Activated naive CD4-positive, alpha-beta T cell treated with anti-CD3 and anti-CD28 coated beads for 36 hours (primary cell): ENCODE measurements at regions of chr11 and their contacts with region 1.

Region 1: DNA sequence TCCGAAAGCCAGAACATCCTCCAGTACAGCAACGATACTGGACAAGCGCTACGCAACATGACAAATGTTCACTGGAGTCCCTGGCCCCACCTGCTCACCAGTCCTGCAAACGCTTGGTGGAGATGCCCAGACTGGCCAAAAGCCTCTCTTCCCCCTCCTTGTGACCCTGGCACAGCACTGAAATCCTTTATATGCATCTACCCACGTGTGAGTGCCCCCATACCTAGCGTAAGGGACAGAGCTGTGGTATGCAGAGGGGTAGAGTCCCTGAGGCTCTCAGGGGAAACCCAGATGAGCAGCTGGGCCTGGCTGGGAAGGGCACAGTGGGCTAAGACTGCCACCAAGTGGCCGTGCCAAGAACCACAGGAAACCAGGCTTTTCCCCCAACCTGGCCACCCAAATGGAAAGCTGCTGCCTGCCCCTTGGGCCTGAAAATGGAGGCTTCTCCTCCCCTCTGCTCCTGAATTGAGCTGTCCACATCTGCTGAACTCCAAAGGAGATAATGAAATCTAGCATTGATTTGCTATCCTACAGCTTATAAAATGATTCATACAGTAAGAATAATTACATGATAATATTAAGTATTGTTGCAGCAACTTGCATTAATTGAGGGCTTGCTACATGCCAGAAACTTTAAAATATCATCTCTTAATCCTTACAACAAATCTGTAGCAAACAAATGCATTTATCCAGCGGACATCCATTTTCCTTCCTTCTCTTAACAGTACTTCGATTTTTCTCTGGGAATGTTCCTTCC is 24.8 kb upstream of the TTC12 start:
- DNase-seq: peak; percentile 82
- H3K4me3 Mint-ChIP-seq: no peak overlapping the region
- H3K27ac Mint-ChIP-seq: no peak overlapping the region
- H3K4me1 Mint-ChIP-seq: no peaks in the 10 kb centered on the region
- H3K27me3 Mint-ChIP-seq: peaks cover 7% of the 10 kb centered on the region

Region 2: DNA sequence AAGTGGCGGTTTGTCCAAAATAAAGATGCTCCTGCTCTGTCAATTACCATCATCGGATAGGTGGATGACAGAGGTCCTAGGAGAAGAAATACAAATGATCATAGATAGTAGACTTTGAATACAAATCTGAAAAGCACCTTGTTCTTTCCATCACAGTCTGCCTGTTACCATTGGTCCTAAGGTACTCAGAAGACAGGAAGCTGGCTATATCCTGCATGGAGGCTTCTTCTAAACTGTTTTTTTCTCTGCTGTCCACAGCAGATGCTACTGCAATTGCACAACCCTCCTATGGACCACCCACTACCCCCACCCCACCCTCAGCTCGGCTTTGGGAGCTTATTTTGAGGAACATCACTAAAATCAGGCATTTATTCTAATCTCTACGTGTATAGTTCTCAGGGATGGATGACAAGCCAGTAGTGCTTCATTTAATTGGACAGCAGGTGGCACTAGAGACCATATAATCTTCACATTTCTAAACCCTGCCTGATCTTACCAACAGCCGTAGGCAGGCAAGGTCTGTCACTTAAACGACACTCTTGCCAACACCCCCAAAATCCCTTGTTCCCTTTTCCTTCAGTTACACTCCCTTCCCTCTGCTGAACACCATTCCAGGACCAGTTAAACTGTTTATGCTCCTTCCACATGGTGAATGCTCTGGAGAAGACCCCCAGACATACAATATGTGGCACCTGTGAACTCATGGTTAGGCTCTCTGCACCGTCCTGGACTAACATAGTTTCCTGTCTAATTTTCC is 1070.0 kb before region 1 on chr11:
- CTCF ChIA-PET with region 1: no interaction called
- intact Hi-C with region 1: loop called (anchors 1 kb)
- DNase-seq: peak; percentile 48
- H3K4me3 Mint-ChIP-seq: no peak overlapping the region
- H3K27ac Mint-ChIP-seq: no peak overlapping the region
- H3K4me1 Mint-ChIP-seq: no peaks in the 10 kb centered on the region
- H3K27me3 Mint-ChIP-seq: no peaks in the 10 kb centered on the region

Region 3: DNA sequence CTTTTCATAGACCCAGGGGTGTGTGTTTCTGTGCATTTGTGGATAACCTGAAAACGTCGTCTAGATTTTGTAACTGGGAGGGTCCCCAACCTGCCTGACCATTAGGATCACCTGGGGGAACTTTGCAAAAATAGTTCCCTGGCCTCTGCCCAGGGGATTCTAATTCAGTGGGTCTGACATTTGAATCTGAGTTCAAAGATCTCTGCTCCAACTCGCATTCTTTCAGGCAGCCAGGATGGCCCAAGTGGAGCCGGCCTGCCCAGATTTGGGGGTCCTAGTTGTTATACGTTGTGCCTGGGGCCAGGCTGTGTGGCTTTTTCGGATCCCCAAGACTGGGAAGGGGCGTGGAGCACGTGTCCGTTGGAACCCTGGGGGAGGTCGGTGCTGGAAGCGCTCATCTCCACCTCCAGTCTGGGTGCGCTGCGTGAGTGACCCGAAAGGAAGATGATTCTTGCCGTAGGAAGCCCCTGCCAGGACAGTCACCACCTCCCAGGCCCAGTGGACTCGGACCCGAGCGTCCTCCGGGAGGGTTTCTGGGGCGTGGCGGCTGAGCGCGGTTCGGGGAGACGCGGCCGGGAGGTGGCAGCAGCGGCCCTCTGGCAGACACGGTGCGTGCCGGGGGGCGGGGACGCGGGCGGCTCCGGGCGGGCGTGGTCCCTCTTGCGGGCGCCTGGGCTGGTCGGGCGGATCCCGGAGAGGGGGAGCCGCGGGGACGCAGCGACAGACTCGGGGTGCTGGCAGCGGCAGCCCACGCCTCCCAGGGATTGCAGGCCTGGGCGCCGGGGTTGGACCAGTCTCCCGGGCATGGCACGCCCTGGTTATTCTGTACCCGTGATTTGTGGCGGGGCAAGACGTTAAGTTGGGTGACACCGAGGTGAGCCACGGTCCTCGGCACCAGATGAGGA is 999.8 kb before region 1 on chr11:
- CTCF ChIA-PET with region 1: interaction called, 3 read pairs
- intact Hi-C with region 1: loop called (anchors 1 kb)
- DNase-seq: peak; percentile 83
- H3K4me3 Mint-ChIP-seq: peak overlapping the region; percentile 67
- H3K27ac Mint-ChIP-seq: no peak overlapping the region
- H3K4me1 Mint-ChIP-seq: peaks cover 20% of the 10 kb centered on the region
- H3K27me3 Mint-ChIP-seq: no peaks in the 10 kb centered on the region

Region 4: GRCh38 chr11:112588252-112588694 is 701.3 kb before region 1 on chr11:
- CTCF ChIA-PET with region 1: interaction called, 59 read pairs
- intact Hi-C with region 1: loop called (anchors 1 kb)
- DNase-seq: peak; percentile 58
- H3K4me3 Mint-ChIP-seq: no peak overlapping the region
- H3K27ac Mint-ChIP-seq: no peak overlapping the region
- H3K4me1 Mint-ChIP-seq: no peaks in the 10 kb centered on the region
- H3K27me3 Mint-ChIP-seq: no peaks in the 10 kb centered on the region

Region 5: DNA sequence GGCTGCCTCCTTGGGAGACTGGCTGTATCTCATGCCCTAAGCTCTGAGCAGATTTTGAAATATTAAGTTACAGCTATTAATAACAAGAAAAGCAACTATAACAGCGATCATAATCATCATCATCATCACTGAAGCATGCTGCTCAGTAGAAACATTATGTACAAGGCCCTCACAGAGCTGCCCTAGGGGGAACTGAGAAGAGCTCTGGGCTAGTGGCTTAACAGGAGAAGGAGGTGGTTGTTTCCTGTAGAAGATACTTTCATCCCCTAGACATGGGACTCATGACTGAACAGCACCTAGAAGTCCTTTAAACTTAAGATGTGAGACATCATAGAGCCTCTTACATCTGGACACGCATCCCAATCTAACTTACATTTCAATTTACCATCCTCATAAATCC is 696.2 kb before region 1 on chr11:
- CTCF ChIA-PET with region 1: interaction called, 59 read pairs
- intact Hi-C with region 1: loop called (anchors 1 kb)
- DNase-seq: no peak
- H3K4me3 Mint-ChIP-seq: no peak overlapping the region
- H3K27ac Mint-ChIP-seq: no peak overlapping the region
- H3K4me1 Mint-ChIP-seq: peaks cover 4% of the 10 kb centered on the region
- H3K27me3 Mint-ChIP-seq: no peaks in the 10 kb centered on the region

Region 6: DNA sequence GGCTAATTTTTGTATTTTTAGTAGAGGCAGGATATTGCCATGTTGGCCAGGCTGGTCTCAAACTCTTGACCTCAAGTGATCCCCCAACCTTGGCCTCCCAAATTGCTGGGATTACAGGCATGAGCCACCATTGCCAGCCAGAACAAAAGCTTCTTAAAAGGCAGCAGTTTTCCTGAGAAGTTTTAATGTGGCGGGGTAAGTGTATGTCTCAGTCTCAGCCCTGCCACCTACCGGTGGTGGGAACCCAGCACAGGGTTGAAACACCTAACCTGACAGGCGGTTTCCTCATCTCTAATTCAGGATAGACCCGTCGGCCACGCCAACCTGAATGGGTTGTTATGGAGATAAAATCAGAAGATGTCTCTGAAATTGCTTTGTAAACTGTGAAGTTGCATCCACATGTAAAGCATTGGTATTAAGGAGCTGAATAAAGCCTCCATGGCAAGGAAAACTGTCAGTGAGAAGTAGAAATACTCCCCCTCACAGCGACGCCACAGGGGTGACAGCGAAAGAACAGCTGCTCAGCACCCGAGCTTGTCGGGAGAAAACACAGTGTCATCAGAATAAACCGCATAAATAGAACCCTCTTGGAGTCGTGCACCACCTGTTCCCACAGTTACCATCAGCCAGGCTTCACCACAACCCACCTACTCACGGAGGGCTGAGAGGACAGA is 494.3 kb before region 1 on chr11:
- CTCF ChIA-PET with region 1: interaction called, 4 read pairs
- intact Hi-C with region 1: loop called (anchors 1 kb)
- DNase-seq: peak; percentile 55
- H3K4me3 Mint-ChIP-seq: no peak overlapping the region
- H3K27ac Mint-ChIP-seq: no peak overlapping the region
- H3K4me1 Mint-ChIP-seq: peaks cover 4% of the 10 kb centered on the region
- H3K27me3 Mint-ChIP-seq: peaks cover 2% of the 10 kb centered on the region

Region 7: DNA sequence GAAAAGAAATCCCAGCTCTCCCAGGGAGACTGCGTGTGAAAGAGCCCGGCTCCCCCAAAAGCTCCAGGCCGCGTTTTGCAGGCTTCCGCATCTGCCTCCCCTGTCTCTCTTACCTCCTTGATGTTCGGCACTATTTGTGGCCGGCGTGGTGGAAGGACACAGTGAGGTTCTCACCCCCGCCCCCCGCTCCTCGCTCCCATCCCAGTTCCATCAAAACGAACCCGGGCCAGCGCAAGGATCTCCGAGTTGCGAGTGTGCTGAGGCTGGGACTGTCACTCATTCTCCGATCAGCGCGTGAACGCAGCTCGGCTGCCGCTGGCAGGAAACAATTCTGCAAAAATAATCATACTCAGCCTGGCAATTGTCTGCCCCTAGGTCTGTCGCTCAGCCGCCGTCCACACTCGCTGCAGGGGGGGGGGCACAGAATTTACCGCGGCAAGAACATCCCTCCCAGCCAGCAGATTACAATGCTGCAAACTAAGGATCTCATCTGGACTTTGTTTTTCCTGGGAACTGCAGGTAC is 328.4 kb before region 1 on chr11 and contains the start of gene NCAM1:
- CTCF ChIA-PET with region 1: no interaction called
- intact Hi-C with region 1: loop called (anchors 10 kb)
- DNase-seq: peak; percentile 21
- H3K4me3 Mint-ChIP-seq: peak within 1 kb of the TSS; percentile 65
- H3K27ac Mint-ChIP-seq: no peak within 1 kb of the TSS
- H3K4me1 Mint-ChIP-seq: peaks cover 12% of the 10 kb centered on the region
- H3K27me3 Mint-ChIP-seq: peaks cover 59% of the 10 kb centered on the region
- total RNA-seq, gene NCAM1: not detected